Esophagus muscularis mucosa (tissue), 4 donors: ENCODE measurements at regions of chr5 and their contacts with region 1.

Region 1: DNA sequence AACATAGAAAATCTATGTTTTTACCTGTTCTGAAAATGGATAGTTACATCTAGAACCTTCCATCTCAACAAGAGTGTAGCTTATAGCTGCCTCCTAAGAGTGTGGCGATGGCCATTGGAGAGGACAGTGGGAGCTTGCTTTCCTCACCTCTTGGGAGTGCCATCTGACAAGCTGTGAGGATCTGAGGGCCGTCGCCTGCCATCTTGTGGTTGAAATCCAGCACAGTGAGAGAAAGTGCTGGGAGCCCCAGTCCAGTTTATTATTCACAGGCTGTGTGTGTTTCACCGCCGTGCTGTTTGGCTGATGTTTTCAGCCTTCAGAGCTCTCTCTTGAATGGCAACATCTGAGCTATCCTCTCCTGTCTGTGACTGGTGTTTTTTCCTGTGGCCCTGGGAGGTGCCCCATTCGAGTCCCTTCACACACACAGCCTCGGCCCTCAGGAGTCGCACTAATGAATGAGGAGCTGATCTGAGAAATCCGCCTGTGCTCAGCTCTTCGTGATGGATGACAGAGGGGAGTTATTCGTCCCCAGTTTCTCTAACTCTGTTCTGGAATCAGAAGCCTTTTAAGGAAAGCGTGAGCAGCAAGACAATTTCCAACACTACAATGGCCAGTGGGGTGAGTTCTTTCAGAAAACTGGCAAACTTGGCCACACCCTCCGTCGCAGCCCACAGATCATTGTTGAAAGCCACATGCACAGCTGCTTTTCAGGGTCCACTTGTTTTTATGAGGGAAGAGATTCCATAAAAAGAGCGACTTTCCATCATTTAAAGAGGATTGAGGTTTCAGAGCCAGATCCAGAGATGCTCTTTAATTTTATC is 170.3 kb downstream of the PDZD2 start:
- DNase-seq: no peak
- H3K4me3 ChIP-seq: no peak overlapping the region
- H3K27ac ChIP-seq: no peak overlapping the region
- H3K4me1 ChIP-seq: no peaks in the 10 kb centered on the region
- H3K27me3 ChIP-seq: peaks cover 0 to 16% (median 0%) of the 10 kb centered on the region in 4 donors
- CTCF ChIP-seq: peak; percentile 56 to 74 (median 65)
- EP300 ChIP-seq: no peak
- POLR2A ChIP-seq: no peak

Region 2: DNA sequence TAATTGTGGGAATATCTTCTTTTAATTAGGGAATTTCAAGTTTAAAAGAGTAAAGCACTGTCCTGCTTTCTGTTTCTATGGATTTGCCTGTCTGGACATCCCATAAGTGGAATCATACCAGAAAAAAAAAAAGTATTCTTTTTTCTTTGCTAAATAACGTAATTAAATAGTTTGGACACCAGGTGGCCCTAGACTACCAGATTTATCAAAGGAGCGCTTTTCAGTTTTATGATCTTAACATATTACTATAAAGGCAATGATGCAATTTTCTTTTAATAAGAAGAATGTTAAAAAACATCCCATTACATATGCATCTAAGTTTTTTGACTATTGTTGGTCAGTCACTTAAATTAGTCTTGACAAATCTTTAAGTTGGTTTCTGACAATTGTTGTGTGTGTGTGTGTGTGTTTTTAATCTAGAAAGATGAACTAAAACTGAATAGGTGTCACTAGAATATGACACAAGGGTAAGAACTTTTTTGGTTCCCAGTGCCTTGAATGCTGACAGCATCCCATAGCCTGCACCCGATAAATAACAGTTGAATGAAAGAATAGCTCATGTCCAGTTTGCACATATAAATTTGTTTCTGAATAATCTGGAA is 227.7 kb before region 1 on chr5:
- intact Hi-C with region 1: loop called (anchors 2 kb)
- DNase-seq: no peak
- H3K4me3 ChIP-seq: no peak overlapping the region
- H3K27ac ChIP-seq: no peak overlapping the region
- H3K4me1 ChIP-seq: no peaks in the 10 kb centered on the region
- H3K27me3 ChIP-seq: peaks cover 0 to 13% (median 0%) of the 10 kb centered on the region in 4 donors
- CTCF ChIP-seq: peak; percentile 44 to 51 (median 50)
- EP300 ChIP-seq: no peak
- POLR2A ChIP-seq: no peak